ENCODE measurements at regions of chr5 and their contacts with region 1.

Region 1: GRCh38 chr5:178688551-178688950 is 41.9 kb downstream of the ZNF354A start:
- DNase-seq: peak; percentile 62
- H3K4me3 ChIP-seq: no peak overlapping the region
- H3K27ac ChIP-seq: no peak overlapping the region
- H3K4me1 ChIP-seq: peaks cover 2% of the 10 kb centered on the region
- H3K27me3 ChIP-seq: no peaks in the 10 kb centered on the region
- CTCF ChIP-seq: no peak

Region 2: GRCh38 chr5:178580271-178580955 is 108.1 kb before region 1 on chr5:
- CTCF ChIA-PET with region 1: no interaction called
- dilution Hi-C with region 1: loop called (anchors 5 kb)
- in situ Hi-C with region 1: no loop called
- intact Hi-C with region 1: no loop called
- DNase-seq: no peak
- H3K4me3 ChIP-seq: no peak overlapping the region
- H3K27ac ChIP-seq: no peak overlapping the region
- H3K4me1 ChIP-seq: no peaks in the 10 kb centered on the region
- H3K27me3 ChIP-seq: no peaks in the 10 kb centered on the region
- CTCF ChIP-seq: no peak

Region 3: GRCh38 chr5:178766936-178767912 is 78.7 kb after region 1 on chr5:
- CTCF ChIA-PET with region 1: no interaction called
- dilution Hi-C with region 1: no loop called
- in situ Hi-C with region 1: no loop called
- intact Hi-C with region 1: no loop called
- DNase-seq: no peak
- H3K4me3 ChIP-seq: no peak overlapping the region
- H3K27ac ChIP-seq: no peak overlapping the region
- H3K4me1 ChIP-seq: no peaks in the 10 kb centered on the region
- H3K27me3 ChIP-seq: no peaks in the 10 kb centered on the region
- CTCF ChIP-seq: no peak

Region 4: GRCh38 chr5:178986326-178986960 is 297.9 kb after region 1 on chr5:
- CTCF ChIA-PET with region 1: no interaction called
- dilution Hi-C with region 1: no loop called
- in situ Hi-C with region 1: no loop called
- intact Hi-C with region 1: no loop called
- DNase-seq: no peak
- H3K4me3 ChIP-seq: no peak overlapping the region
- H3K27ac ChIP-seq: no peak overlapping the region
- H3K4me1 ChIP-seq: no peaks in the 10 kb centered on the region
- H3K27me3 ChIP-seq: no peaks in the 10 kb centered on the region
- CTCF ChIP-seq: no peak

Measured in mammary epithelial cell (primary cell).